Calu3 (cell line): ENCODE measurements at regions of chr5 and their contacts with region 1.

Region 1: GRCh38 chr5:38871790-38872551 is 26.2 kb downstream of the OSMR start:
- DNase-seq: peak; percentile 57
- H3K4me3 Mint-ChIP-seq: peak overlapping the region; percentile 41
- H3K27ac Mint-ChIP-seq: peak overlapping the region; percentile 94
- H3K4me1 Mint-ChIP-seq: peaks cover 72% of the 10 kb centered on the region
- H3K27me3 Mint-ChIP-seq: no peaks in the 10 kb centered on the region
- CTCF ChIP-seq: no peak

Region 2: GRCh38 chr5:38831909-38832308 is 40.1 kb before region 1 on chr5:
- CTCF ChIA-PET with region 1: no interaction called
- intact Hi-C with region 1: loop called (anchors 1 kb)
- DNase-seq: no peak
- H3K4me3 Mint-ChIP-seq: no peak overlapping the region
- H3K27ac Mint-ChIP-seq: peak overlapping the region; percentile 20
- H3K4me1 Mint-ChIP-seq: peaks cover 30% of the 10 kb centered on the region
- H3K27me3 Mint-ChIP-seq: no peaks in the 10 kb centered on the region
- CTCF ChIP-seq: peak; percentile 59

Region 3: GRCh38 chr5:38845526-38846378 is 26.2 kb before region 1 on chr5 and contains the start of gene OSMR:
- CTCF ChIA-PET with region 1: interaction called, 9 read pairs
- intact Hi-C with region 1: loop called (anchors 1 kb)
- DNase-seq: peak; percentile 93
- H3K4me3 Mint-ChIP-seq: peak within 1 kb of the TSS; percentile 89
- H3K27ac Mint-ChIP-seq: peak within 1 kb of the TSS; percentile 94
- H3K4me1 Mint-ChIP-seq: peaks cover 26% of the 10 kb centered on the region
- H3K27me3 Mint-ChIP-seq: no peaks in the 10 kb centered on the region
- CTCF ChIP-seq: peak; percentile 12
- total RNA-seq, gene OSMR: 59.8 and 76.4 TPM in 2 replicates

Region 4: DNA sequence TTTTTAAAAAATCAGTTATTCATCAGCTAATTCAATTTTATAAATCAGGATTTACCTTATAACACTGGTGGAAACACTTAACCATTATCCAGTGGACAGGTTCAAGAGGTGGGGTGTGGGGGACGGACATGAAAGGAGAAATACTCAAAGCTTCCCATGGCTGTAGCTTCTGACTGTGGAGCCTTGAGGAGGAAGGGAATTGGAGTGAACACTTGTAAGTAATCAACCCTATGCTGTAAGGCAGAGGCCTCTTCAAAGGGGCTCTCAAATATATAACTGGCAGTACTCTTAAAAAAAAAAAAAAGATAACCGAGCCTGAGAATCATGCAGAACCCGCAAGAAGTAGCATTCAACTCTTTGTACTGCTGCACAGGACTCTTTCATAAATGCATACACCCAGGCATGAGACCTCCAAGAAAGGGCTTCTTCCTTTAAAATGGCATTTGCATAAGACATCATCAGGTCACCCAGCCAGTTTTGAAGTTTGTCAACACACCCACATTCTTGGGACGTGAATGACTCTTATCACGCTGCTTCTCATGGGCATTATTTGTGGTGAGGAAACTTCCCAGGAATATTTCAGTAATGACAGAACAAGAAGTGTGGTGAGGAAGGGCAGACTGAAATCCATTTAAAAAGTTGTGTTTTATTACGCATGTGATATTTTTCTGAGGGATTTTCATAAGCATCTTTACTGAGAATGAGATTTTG is 18.1 kb before region 1 on chr5:
- CTCF ChIA-PET with region 1: interaction called, 7 read pairs
- intact Hi-C with region 1: loop called (anchors 1 kb)
- DNase-seq: peak; percentile 70
- H3K4me3 Mint-ChIP-seq: peak overlapping the region; percentile 46
- H3K27ac Mint-ChIP-seq: peak overlapping the region; percentile 94
- H3K4me1 Mint-ChIP-seq: peaks cover 47% of the 10 kb centered on the region
- H3K27me3 Mint-ChIP-seq: no peaks in the 10 kb centered on the region
- CTCF ChIP-seq: no peak

Region 5: DNA sequence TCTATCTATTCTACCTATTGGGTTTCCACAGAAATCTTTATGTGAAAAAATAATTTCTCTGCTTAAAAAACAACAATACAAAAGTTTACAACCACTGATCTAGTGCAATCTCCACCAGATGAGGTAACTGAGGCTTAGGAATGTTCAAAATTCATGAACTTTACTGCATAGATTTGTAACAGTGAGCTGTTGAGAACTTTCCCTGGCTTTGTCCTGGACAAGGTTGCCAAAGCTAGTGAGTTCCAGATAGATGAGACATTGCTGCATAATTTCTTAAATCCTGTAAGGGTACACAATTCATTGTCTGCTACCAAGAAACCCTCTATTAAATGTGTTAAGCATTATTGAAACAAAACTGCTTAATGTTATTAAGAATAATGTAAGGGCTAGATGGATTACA is 76.5 kb after region 1 on chr5:
- CTCF ChIA-PET with region 1: no interaction called
- intact Hi-C with region 1: no loop called
- DNase-seq: no peak
- H3K4me3 Mint-ChIP-seq: no peak overlapping the region
- H3K27ac Mint-ChIP-seq: no peak overlapping the region
- H3K4me1 Mint-ChIP-seq: no peaks in the 10 kb centered on the region
- H3K27me3 Mint-ChIP-seq: no peaks in the 10 kb centered on the region
- CTCF ChIP-seq: no peak

Region 6: DNA sequence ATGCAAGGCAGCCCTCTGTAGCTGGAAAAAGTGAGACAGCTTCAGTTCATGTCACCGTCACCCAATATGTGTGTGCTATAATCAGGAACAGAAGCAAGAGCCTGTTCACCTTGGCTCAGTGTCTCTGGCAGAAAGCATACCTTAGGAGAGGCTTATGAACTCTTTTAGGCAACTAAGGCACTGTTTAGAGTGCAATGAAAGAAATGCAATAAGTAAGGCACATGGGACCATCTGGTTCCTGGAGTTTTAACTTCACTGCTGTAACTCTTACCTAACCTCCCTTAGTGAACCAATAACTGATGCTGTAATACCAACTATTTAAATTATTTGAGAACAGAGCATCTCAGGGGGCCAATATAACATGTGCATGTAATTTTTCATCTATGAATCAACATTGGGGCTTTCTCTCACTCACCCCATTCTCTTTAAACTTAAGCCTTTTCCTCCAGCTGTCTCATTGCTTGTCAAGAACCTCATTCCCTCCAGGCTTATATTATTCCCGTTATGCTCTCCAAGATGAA is 459.9 kb after region 1 on chr5:
- CTCF ChIA-PET with region 1: no interaction called
- intact Hi-C with region 1: no loop called
- DNase-seq: no peak
- H3K4me3 Mint-ChIP-seq: no peak overlapping the region
- H3K27ac Mint-ChIP-seq: no peak overlapping the region
- H3K4me1 Mint-ChIP-seq: no peaks in the 10 kb centered on the region
- H3K27me3 Mint-ChIP-seq: no peaks in the 10 kb centered on the region
- CTCF ChIP-seq: no peak